ENCODE measurements at regions of chr6 and their contacts with region 1.

Region 1: GRCh38 chr6:107820338-107821261 is 3.5 kb downstream of the SCML4 start:
- DNase-seq: peak; percentile 39
- H3K4me3 Mint-ChIP-seq: peak overlapping the region; percentile 75
- H3K27ac Mint-ChIP-seq: peak overlapping the region; percentile 80
- H3K4me1 Mint-ChIP-seq: peaks cover 67% of the 10 kb centered on the region
- H3K27me3 Mint-ChIP-seq: no peaks in the 10 kb centered on the region

Region 2: GRCh38 chr6:107712665-107713551 is 107.7 kb before region 1 on chr6:
- CTCF ChIA-PET with region 1: interaction called, 4 read pairs
- POLR2A ChIA-PET with region 1: interaction called, 13 read pairs
- DNase-seq: peak; percentile 34
- H3K4me3 Mint-ChIP-seq: peak overlapping the region; percentile 21
- H3K27ac Mint-ChIP-seq: peak overlapping the region; percentile 65
- H3K4me1 Mint-ChIP-seq: peaks cover 59% of the 10 kb centered on the region
- H3K27me3 Mint-ChIP-seq: no peaks in the 10 kb centered on the region

Region 3: GRCh38 chr6:107731422-107732319 is 88.9 kb before region 1 on chr6:
- CTCF ChIA-PET with region 1: interaction called, 10 read pairs
- POLR2A ChIA-PET with region 1: interaction called, 25 read pairs
- DNase-seq: no peak
- H3K4me3 Mint-ChIP-seq: peak overlapping the region; percentile 74
- H3K27ac Mint-ChIP-seq: peak overlapping the region; percentile 48
- H3K4me1 Mint-ChIP-seq: peaks cover 66% of the 10 kb centered on the region
- H3K27me3 Mint-ChIP-seq: peaks cover 25% of the 10 kb centered on the region

Region 4: GRCh38 chr6:107740496-107741190 is 80.0 kb before region 1 on chr6:
- CTCF ChIA-PET with region 1: interaction called, 10 read pairs
- POLR2A ChIA-PET with region 1: interaction called, 21 read pairs
- DNase-seq: peak; percentile 45
- H3K4me3 Mint-ChIP-seq: peak overlapping the region; percentile 57
- H3K27ac Mint-ChIP-seq: peak overlapping the region; percentile 66
- H3K4me1 Mint-ChIP-seq: peaks cover 51% of the 10 kb centered on the region
- H3K27me3 Mint-ChIP-seq: peaks cover 9% of the 10 kb centered on the region

Region 5: GRCh38 chr6:107786709-107787588 is 33.7 kb before region 1 on chr6:
- CTCF ChIA-PET with region 1: interaction called, 6 read pairs
- POLR2A ChIA-PET with region 1: interaction called, 62 read pairs
- DNase-seq: peak; percentile 61
- H3K4me3 Mint-ChIP-seq: peak overlapping the region; percentile 54
- H3K27ac Mint-ChIP-seq: peak overlapping the region; percentile 82
- H3K4me1 Mint-ChIP-seq: peaks cover 45% of the 10 kb centered on the region
- H3K27me3 Mint-ChIP-seq: peaks cover 2% of the 10 kb centered on the region

Region 6: DNA sequence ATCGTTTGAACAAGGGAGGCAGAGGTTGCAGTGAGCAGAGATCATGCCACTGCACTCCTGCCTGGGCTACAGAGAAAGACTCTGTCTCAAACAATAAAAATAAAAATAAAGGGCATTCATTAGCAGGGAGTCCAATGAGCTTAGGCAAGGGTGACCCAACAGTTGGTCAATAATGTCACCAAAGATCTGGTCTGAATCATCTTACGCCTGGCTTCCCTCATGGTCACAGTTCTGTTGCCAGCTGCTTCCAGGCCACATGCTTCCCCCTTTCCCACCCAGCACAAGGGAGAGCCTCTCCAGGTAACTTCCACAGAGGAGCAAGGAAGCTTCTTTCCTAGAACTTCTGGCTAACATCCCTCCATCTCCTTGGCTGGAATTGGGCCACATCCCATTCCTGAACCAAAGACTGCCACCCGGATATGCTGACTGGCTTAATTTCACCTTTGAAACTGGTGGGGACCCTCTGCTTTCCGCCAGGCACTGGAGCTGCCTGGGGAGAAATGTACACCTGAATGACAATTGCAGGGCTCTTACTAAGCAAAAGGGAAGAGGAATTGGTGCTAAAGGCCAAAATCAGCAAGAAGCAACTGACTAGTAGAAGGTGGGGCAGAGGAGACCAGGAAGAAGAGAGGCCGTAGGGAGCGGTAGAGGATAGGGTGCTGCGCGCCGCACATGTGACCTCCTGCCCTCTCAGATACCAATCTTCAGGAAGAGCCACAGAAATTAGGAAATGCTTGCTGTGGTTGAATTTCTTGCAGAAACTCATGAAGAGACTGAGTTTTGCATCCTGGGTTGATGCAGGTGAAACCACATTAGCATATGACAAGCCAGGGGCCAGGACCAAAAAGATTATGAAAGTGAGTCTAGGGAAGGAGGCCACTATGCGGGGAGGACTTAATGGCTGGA is 11.8 kb after region 1 on chr6:
- CTCF ChIA-PET with region 1: interaction called, 3 read pairs
- POLR2A ChIA-PET with region 1: interaction called, 18 read pairs
- DNase-seq: no peak
- H3K4me3 Mint-ChIP-seq: no peak overlapping the region
- H3K27ac Mint-ChIP-seq: no peak overlapping the region
- H3K4me1 Mint-ChIP-seq: peaks cover 11% of the 10 kb centered on the region
- H3K27me3 Mint-ChIP-seq: peaks cover 2% of the 10 kb centered on the region

Region 7: DNA sequence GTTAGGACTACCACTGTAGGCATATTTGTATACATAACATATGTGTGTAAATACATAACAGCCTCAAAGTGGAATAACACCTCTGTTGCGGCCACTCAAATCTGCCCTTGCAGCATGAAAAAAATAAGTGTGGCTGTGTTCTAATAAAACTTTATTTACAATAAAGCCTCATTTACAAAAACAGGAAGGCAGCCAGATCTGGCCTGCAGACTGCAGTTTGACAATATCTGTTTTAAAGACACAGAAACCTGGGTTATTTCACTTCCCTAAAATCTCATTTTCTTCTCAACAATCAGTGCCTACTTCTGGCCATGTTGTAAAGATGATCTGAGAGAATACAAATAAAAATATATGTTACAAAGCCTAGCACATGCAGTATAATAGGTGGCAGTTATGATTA is 57.4 kb after region 1 on chr6:
- CTCF ChIA-PET with region 1: no interaction called
- POLR2A ChIA-PET with region 1: no interaction called
- DNase-seq: no peak
- H3K4me3 Mint-ChIP-seq: no peak overlapping the region
- H3K27ac Mint-ChIP-seq: no peak overlapping the region
- H3K4me1 Mint-ChIP-seq: no peaks in the 10 kb centered on the region
- H3K27me3 Mint-ChIP-seq: no peaks in the 10 kb centered on the region